ENCODE measurements at regions of chr12 and their contacts with region 1.

Region 1: GRCh38 chr12:90978117-90978770 is 23.3 kb upstream of the CCER1 start:
- DNase-seq: no peak
- ATAC-seq: peak; percentile 79 to 84

Region 2: DNA sequence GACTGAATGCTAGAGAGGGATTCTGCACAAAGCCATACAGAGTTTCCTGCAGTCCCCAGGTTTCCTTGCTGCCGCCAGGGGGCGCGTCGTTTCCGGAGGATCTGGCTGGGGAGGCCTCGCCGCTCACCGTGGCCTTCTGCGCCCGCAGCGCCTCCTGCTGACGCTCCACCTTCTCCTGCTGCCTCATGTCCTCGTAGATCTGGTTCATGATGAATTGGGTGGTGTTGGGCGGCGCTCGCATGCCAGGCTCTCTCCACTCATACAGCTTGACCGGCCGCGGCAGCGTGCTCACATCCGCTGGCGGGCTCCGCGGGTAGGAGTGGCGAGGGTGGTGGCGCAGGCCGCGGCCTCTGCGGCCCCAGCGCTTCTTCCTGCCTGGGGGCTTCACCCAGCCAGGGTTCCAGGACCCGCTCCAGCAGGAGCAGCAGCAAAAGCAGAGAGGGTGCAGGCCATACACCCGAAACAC is 24.3 kb before region 1 on chr12:
- intact Hi-C with region 1: no loop called
- DNase-seq: no peak
- ATAC-seq: no peak

Region 3: DNA sequence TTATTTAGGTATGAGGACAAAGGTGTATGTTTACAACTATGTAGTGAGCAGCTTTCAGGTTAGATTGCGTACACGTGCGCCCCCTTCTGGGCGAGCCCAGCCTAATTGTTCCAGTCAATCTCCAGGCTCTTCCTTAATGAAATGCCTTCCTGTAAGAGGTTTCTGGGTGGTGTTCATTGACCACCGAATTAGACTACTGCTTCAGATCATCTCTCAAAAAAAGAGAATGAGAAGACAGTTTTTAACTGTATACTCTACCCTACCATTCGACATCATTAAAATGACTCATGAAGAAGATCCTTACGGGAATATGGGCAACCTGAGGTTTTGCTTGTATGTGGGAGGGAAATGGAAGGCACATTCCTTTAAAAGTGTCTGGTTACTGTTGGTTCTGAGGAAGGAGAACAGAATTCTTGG is 130.9 kb after region 1 on chr12:
- intact Hi-C with region 1: loop called in 1 of 2 experiments (anchors 5 kb)
- DNase-seq: peak; percentile 73
- ATAC-seq: peak; percentile 68 to 77

Region 4: GRCh38 chr12:91349476-91349875 is 371.2 kb after region 1 on chr12:
- intact Hi-C with region 1: loop called in 1 of 2 experiments (anchors 10 kb)
- DNase-seq: no peak
- ATAC-seq: no peak

Region 5: DNA sequence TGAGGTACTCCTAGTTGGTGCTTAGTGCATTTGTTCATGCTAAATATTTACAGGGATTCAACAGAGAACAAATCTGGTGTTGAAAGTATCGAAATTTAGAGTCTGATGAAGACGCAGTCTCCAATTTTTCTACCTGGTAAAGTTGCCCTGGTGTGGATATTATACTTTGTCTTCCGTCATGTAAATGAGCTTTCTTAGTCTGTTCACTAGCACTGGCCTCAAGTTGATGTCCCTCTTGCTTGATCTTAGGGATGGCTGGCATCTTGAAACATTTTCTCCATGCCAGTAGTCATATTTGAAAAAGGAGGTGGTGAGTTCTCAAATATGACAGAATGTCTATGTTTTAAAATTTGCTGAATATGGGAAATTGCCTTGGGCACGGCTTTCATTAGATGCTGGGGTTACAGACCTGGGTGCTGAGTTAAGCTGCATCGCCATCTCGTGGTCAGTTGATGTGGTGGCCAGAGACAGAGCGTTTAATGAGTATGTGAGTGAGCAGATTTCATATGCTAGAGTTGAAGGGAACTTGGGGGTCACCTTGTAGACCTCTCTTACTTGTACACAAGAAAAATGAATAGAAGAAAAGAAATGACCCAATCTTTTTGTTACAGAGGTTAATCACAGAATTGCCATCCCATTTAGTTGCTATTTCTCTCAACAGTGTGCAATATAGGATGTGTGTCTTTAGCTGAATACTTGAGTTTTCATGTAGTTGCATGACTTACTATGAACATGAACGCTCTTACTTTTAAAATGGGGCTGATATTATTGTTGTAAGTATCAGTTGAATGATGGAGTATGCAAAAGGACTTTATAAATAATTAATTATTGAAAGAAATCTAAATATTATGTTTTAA is 377.1 kb after region 1 on chr12:
- intact Hi-C with region 1: loop called in 1 of 2 experiments (anchors 5 kb)
- DNase-seq: peak; percentile 71
- ATAC-seq: peak; percentile 92 to 93